Activated T-helper 1 cell treated with anti-CD3 and anti-CD28 coated beads, Interleukin-12 subunit alpha, Interleukin-12 subunit beta, Interleukin-2, Interleukin-4 antibody, amounts not matched to agents 30 ng/mL and 10 ng/mL and 1 ng/mL, durations not matched to agents 14 hours and 24 hours and 36 hours (primary cell): ENCODE measurements at regions of chr2 and their contacts with region 1.

Region 1: DNA sequence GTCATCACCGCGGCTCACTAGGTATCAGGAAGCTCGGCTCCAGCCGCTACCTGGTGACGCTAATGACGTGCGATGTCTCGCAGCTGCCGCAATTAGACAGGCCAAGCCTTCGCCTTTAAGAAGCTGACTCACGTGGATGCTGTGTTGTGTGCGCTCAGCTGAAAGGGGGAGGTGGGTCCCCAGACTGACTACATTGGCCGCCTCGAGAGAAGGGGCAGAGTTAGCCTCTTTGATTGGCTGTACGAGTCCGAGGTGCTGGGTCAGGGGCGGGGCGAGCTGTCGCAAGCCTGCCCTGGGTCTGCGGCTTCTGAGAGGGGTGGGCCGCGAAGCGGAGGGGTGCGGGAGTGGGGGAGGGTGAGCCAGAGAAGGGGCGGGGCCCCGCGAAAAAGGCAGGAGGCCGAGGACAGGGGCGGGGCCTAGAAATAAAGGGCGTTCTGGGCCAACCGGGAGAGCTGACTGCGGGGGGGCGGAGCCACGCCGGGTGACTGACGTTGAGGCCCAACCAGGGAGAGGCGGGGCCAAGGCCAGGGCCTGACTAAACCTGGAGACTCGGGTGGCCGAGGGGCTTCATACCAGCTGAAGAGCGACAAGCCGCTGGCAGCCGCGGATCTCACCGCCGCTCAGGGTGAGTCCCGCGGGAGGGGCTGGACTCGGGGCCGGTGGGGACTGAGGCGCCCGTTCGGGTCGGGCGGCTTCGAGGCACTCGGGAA is at the start of gene YPEL5:
- DNase-seq: peak; percentile 99
- H3K4me3 Mint-ChIP-seq: peak within 1 kb of the TSS; percentile 83
- H3K27ac Mint-ChIP-seq: peak within 1 kb of the TSS; percentile 95
- H3K4me1 Mint-ChIP-seq: peaks cover 41% of the 10 kb centered on the region
- H3K27me3 Mint-ChIP-seq: no peaks in the 10 kb centered on the region
- total RNA-seq, gene YPEL5: 25.1 and 27.3 TPM in 2 replicates

Region 2: DNA sequence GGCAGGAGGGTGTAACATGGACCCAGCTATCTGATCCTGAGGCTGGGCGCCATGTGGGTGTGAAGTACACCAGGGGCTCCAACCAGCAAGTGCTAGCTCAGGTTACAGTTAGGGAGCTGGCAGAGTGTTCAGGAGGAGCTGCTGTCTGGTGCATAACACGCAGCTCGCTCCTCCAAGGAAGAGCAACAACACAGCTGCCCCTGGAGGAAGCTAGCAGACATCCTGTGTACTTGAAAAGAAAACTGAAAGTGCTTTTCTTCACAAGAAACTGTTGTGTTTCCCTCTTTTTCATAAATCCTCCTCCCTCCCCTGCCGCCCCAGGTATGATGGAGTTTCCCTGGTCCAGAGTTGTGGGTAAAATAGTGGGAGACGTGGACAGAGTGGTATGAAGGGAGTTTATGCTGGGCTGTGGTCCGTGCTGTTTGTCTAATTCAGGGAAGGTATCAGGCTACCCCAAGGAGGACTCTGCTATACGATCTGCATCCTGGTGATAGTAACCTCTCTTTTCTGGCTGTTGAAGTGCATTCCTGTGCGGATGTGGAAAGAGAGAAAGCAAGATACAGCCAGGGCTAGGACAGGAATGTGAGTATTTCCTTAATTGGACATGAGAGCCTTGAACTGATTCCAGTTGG is 78.7 kb after region 1 on chr2:
- intact Hi-C with region 1: loop called (anchors 1 kb)
- DNase-seq: peak; percentile 48
- H3K4me3 Mint-ChIP-seq: peak overlapping the region; percentile 91
- H3K27ac Mint-ChIP-seq: peak overlapping the region; percentile 97
- H3K4me1 Mint-ChIP-seq: peaks cover 77% of the 10 kb centered on the region
- H3K27me3 Mint-ChIP-seq: peaks cover 5% of the 10 kb centered on the region

Region 3: GRCh38 chr2:30252723-30253701 is 106.4 kb after region 1 on chr2:
- intact Hi-C with region 1: loop called (anchors 1 kb)
- DNase-seq: peak; percentile 48
- H3K4me3 Mint-ChIP-seq: peak overlapping the region; percentile 53
- H3K27ac Mint-ChIP-seq: peak overlapping the region; percentile 93
- H3K4me1 Mint-ChIP-seq: peaks cover 92% of the 10 kb centered on the region
- H3K27me3 Mint-ChIP-seq: no peaks in the 10 kb centered on the region

Region 4: DNA sequence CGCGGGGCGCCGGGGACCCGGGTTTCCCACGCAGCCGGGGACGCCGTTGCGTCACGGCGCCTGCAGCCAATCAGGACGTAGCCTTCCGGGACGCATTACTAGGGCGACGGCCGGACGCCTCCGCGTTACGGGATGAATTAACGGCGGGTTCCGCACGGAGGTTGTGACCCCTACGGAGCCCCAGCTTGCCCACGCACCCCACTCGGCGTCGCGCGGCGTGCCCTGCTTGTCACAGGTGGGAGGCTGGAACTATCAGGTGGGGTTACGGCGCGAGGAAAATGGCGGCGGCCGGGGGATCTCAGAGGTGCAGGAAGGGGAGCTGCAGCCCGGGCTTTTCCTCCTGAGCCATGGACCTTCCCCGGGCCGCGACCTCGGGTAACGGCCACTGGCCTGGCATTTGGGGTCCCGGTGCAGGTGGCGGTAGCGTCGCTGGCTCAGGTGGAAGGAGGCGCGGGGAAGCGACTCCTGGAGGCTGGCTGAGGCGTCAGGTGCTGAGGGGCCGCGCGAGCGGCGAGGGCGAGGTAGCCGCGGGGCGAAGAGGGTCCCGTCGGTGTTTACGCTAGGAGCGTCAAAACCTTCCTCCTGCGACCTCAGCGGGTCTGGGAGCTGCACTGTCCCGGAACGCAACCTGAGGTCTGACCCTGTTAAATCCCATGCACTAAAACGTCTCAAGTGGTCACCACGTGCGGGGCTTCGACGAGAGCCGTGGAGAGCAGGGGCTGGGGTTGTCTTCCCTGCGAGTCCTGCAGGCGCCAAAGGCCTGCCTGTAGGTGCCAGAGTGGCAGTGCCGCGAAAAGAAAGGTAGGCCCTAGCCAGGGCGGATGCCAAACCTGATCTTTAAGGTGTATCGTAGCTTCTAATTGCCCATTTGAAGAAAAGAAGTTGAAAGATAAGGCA is 300.8 kb after region 1 on chr2 and contains the start of gene LCLAT1:
- intact Hi-C with region 1: loop called (anchors 2 kb)
- DNase-seq: peak; percentile 84
- H3K4me3 Mint-ChIP-seq: peak within 1 kb of the TSS; percentile 96
- H3K27ac Mint-ChIP-seq: peak within 1 kb of the TSS; percentile 98
- H3K4me1 Mint-ChIP-seq: peaks cover 42% of the 10 kb centered on the region
- H3K27me3 Mint-ChIP-seq: no peaks in the 10 kb centered on the region
- total RNA-seq, gene LCLAT1: 40.1 and 46.2 TPM in 2 replicates

Region 5: DNA sequence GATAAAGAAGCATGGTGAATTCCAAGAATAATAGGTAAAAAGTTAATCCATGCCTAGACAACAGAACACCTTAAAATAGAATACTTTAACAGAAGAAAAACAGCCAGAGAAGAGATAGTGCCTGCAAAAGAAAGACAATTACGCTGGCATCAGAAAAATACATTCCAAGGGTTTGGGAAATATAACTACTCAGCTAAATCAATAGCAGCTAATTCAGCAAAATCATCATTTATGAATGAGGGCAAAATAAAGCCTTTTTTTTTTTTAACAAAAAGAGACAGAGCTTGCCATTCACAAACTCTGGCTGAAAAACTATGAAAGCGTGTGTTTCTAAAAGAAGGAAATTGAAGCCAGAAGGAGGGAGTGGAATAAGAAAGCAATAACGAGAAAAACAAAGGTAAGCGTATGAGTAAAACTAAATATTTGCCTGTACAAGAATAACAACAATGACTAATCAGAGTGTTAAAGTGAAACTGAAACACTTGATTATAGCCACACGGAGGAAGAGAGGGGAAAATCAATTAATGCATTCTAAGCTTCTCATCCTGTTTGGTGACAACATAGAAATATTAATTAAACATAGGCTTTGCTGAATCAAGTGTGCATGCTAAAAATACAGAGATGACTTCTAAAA is 1177.5 kb after region 1 on chr2:
- intact Hi-C with region 1: loop called (anchors 2 kb)
- DNase-seq: no peak
- H3K4me3 Mint-ChIP-seq: peak overlapping the region; percentile 56
- H3K27ac Mint-ChIP-seq: peak overlapping the region; percentile 66
- H3K4me1 Mint-ChIP-seq: peaks cover 52% of the 10 kb centered on the region
- H3K27me3 Mint-ChIP-seq: peaks cover 6% of the 10 kb centered on the region